B cell (primary cell): ENCODE measurements at regions of chr5 and their contacts with region 1.

Region 1: DNA sequence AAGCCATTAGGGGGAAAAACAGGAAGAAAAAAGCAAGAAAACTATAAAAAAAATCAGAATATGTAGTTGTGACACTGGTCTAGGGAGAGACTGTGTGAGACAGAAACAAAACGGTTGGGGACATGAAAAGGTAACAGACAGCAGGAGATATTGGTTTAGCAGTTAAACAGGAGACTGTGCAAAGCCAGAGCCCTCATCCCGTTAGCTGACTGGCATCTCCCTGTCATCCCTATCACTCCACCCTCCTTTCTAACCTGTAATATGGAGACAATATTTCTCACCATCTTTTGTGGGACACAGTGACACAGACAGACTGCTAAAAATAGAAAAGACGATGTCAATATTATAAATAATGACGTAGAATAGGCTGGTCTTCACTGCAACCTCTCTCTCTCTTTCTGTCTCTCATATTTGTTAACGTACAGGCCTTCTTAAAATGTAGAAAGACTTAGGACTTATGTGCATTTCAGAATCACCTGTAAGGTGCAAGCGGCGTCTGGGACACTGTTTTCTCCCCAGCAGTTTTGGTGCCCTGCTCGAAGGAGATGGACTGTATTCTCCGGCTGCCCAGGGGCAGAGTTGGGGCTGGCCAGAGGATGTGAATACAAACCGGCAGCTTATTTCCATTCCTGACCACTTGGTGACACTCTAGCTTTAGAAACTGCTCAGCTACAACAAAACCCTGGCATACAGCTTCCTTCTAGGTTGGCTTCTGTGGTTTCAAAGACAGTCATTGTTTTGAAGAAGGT is 190.6 kb downstream of the MAT2B start:
- DNase-seq: peak; percentile 80
- ATAC-seq: peak; percentile 98
- H3K4me3 ChIP-seq: no peak overlapping the region
- H3K4me3 Mint-ChIP-seq: no peak overlapping the region
- H3K27ac ChIP-seq: no peak overlapping the region
- H3K27ac Mint-ChIP-seq: peak overlapping the region; percentile 17
- H3K4me1 ChIP-seq: peaks cover 6 to 7% of the 10 kb centered on the region in 2 donors
- H3K4me1 Mint-ChIP-seq: peaks cover 10% of the 10 kb centered on the region
- H3K27me3 ChIP-seq: no peaks in the 10 kb centered on the region
- H3K27me3 Mint-ChIP-seq: peaks cover 5% of the 10 kb centered on the region
- CTCF ChIP-seq: peak; percentile 88

Region 2: DNA sequence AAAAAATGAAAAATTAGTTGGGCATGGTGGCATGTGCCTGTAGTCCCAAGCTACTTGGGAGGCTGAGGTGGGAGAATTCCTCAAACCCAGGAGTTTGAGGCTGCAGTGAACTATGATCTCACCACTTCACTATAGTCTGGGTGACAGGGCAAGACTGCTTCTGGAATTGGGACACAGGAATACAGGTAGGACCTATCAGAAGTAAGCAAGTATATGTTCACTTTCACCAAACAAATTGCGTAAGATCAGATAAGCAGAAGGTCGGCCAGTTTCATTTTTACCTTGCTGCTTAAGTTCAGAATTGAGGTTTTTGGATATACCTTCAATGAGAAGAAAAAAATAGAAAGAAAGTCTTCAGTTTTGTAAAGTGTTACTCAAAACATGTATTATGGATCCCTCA is 18.9 kb before region 1 on chr5:
- CTCF ChIA-PET with region 1: no interaction called
- POLR2A ChIA-PET with region 1: no interaction called
- intact Hi-C with region 1: no loop called
- DNase-seq: no peak
- ATAC-seq: no peak
- H3K4me3 ChIP-seq: no peak overlapping the region
- H3K4me3 Mint-ChIP-seq: no peak overlapping the region
- H3K27ac ChIP-seq: no peak overlapping the region
- H3K27ac Mint-ChIP-seq: no peak overlapping the region
- H3K4me1 ChIP-seq: no peaks in the 10 kb centered on the region
- H3K4me1 Mint-ChIP-seq: no peaks in the 10 kb centered on the region
- H3K27me3 ChIP-seq: no peaks in the 10 kb centered on the region
- H3K27me3 Mint-ChIP-seq: peaks cover 12% of the 10 kb centered on the region
- CTCF ChIP-seq: no peak

Region 3: DNA sequence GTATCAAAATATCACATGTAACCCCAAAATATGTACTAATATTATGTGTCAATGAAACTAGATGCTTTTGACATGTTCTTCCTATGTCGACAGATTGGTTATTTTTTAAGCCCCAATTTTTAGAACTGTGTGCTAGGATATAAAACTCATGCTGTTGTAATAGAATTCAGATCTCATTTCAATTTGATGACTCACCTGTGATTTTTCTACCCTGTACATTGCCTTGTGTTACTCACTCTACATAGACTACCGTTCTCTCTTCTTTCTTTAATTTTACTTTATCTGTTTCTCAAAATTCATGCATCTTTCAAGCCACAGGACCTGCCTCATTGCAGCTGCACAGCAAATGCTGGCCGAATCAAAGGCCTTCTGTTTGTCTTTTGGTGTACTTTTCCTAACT is 93.9 kb after region 1 on chr5:
- CTCF ChIA-PET with region 1: no interaction called
- POLR2A ChIA-PET with region 1: no interaction called
- intact Hi-C with region 1: no loop called
- DNase-seq: no peak
- ATAC-seq: no peak
- H3K4me3 ChIP-seq: no peak overlapping the region
- H3K4me3 Mint-ChIP-seq: no peak overlapping the region
- H3K27ac ChIP-seq: no peak overlapping the region
- H3K27ac Mint-ChIP-seq: no peak overlapping the region
- H3K4me1 ChIP-seq: no peaks in the 10 kb centered on the region
- H3K4me1 Mint-ChIP-seq: peaks cover 9% of the 10 kb centered on the region
- H3K27me3 ChIP-seq: no peaks in the 10 kb centered on the region
- H3K27me3 Mint-ChIP-seq: no peaks in the 10 kb centered on the region
- CTCF ChIP-seq: no peak

Region 4: DNA sequence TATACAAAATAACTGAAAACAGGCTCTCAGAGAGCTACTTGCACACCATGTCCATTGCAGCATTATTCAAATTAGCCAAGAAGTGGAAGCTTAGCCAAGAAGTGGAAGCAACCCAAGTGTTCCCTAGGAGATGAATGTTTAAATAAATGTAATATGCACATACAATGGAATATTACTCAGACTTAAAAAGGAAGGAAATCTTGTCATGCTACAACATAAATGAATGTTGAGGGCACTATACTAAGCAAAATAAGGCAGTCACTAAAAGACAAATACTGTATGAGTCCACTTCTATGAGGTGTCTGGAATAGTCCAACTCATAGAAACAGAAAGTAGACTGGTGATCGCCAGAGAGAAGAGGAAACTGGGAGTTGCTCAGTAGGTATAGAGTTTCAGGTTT is 247.5 kb after region 1 on chr5:
- CTCF ChIA-PET with region 1: interaction called, 19 read pairs
- POLR2A ChIA-PET with region 1: no interaction called
- intact Hi-C with region 1: loop called (anchors 10 kb)
- DNase-seq: no peak
- ATAC-seq: no peak
- H3K4me3 ChIP-seq: no peak overlapping the region
- H3K4me3 Mint-ChIP-seq: no peak overlapping the region
- H3K27ac ChIP-seq: no peak overlapping the region
- H3K27ac Mint-ChIP-seq: no peak overlapping the region
- H3K4me1 ChIP-seq: peaks cover 6 to 16% of the 10 kb centered on the region in 2 donors
- H3K4me1 Mint-ChIP-seq: peaks cover 32% of the 10 kb centered on the region
- H3K27me3 ChIP-seq: no peaks in the 10 kb centered on the region
- H3K27me3 Mint-ChIP-seq: no peaks in the 10 kb centered on the region
- CTCF ChIP-seq: no peak

Region 5: GRCh38 chr5:164475339-164475977 is 779.5 kb after region 1 on chr5:
- CTCF ChIA-PET with region 1: interaction called, 33 read pairs
- POLR2A ChIA-PET with region 1: no interaction called
- intact Hi-C with region 1: loop called (anchors 1 kb)
- DNase-seq: peak; percentile 14
- ATAC-seq: no peak
- H3K4me3 ChIP-seq: no peak overlapping the region
- H3K4me3 Mint-ChIP-seq: no peak overlapping the region
- H3K27ac ChIP-seq: no peak overlapping the region
- H3K27ac Mint-ChIP-seq: no peak overlapping the region
- H3K4me1 ChIP-seq: no peaks in the 10 kb centered on the region
- H3K4me1 Mint-ChIP-seq: no peaks in the 10 kb centered on the region
- H3K27me3 ChIP-seq: no peaks in the 10 kb centered on the region
- H3K27me3 Mint-ChIP-seq: no peaks in the 10 kb centered on the region
- CTCF ChIP-seq: peak; percentile 28

Region 6: GRCh38 chr5:164504141-164504772 is 808.3 kb after region 1 on chr5:
- CTCF ChIA-PET with region 1: interaction called, 201 read pairs
- POLR2A ChIA-PET with region 1: no interaction called
- intact Hi-C with region 1: loop called (anchors 1 kb)
- DNase-seq: peak; percentile 75
- ATAC-seq: peak; percentile 51
- H3K4me3 ChIP-seq: no peak overlapping the region
- H3K4me3 Mint-ChIP-seq: no peak overlapping the region
- H3K27ac ChIP-seq: no peak overlapping the region
- H3K27ac Mint-ChIP-seq: no peak overlapping the region
- H3K4me1 ChIP-seq: no peaks in the 10 kb centered on the region
- H3K4me1 Mint-ChIP-seq: peaks cover 7% of the 10 kb centered on the region
- H3K27me3 ChIP-seq: no peaks in the 10 kb centered on the region
- H3K27me3 Mint-ChIP-seq: peaks cover 8% of the 10 kb centered on the region
- CTCF ChIP-seq: peak; percentile 85